ENCODE measurements at regions of chr6 and their contacts with region 1.

Region 1: GRCh38 chr6:149028767-149029405 is 282.1 kb downstream of the UST start:
- DNase-seq: peak in 8 of 9 donors; percentile 45 to 83 (median 76)
- ATAC-seq: peak; percentile 85
- H3K4me3 ChIP-seq: no peak overlapping the region
- H3K4me3 Mint-ChIP-seq: peak overlapping the region in 1 of 10 donors; percentile 68
- H3K27ac ChIP-seq: no peak overlapping the region
- H3K27ac Mint-ChIP-seq: peak overlapping the region in 4 of 9 donors; percentile 2 to 81 (median 43)
- H3K4me1 ChIP-seq: peaks cover 8 to 15% of the 10 kb centered on the region in 2 donors
- H3K4me1 Mint-ChIP-seq: peaks cover 0 to 52% (median 12%) of the 10 kb centered on the region in 7 donors
- H3K27me3 ChIP-seq: no peaks in the 10 kb centered on the region
- H3K27me3 Mint-ChIP-seq: no peaks in the 10 kb centered on the region

Region 2: DNA sequence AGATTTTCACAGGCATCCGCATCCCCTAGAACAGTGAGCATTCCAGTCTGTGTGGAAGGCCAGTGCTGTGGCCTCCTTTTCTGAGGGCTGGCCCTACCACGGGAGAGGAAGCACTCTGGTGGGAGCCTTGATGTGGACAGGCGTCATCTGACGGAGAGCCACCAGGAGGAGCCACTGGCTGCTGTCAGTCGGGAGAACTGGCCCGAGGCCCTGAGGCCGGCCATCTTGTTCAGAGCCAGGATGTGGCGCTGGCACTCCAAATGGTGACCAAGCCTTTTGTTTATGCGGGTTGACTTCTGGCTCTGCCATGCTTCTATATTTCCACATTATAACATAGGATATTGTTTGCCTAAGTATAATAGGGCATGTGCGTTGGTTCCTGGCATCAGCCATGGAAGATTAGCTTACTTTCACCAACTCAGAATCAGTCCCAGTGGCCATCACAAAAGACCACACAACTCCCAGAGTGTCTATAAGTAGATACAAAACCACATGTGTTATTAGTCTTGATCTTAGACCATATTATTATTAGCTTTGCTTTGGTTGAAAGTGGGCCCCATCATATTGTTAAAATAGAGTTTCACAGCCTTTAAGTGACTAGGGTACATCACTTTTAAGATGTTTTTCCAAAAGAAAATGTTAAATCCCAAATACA is 14.7 kb after region 1 on chr6:
- CTCF ChIA-PET with region 1: interaction called, 4 read pairs
- POLR2A ChIA-PET with region 1: interaction called, 3 read pairs
- intact Hi-C with region 1: loop called in 1 of 2 experiments (anchors 1 kb)
- DNase-seq: no peak
- ATAC-seq: no peak
- H3K4me3 ChIP-seq: no peak overlapping the region
- H3K4me3 Mint-ChIP-seq: no peak overlapping the region
- H3K27ac ChIP-seq: no peak overlapping the region
- H3K27ac Mint-ChIP-seq: no peak overlapping the region
- H3K4me1 ChIP-seq: peaks cover 8 to 18% of the 10 kb centered on the region in 2 donors
- H3K4me1 Mint-ChIP-seq: peaks cover 13 to 81% (median 27%) of the 10 kb centered on the region in 7 donors
- H3K27me3 ChIP-seq: no peaks in the 10 kb centered on the region
- H3K27me3 Mint-ChIP-seq: no peaks in the 10 kb centered on the region

Region 3: DNA sequence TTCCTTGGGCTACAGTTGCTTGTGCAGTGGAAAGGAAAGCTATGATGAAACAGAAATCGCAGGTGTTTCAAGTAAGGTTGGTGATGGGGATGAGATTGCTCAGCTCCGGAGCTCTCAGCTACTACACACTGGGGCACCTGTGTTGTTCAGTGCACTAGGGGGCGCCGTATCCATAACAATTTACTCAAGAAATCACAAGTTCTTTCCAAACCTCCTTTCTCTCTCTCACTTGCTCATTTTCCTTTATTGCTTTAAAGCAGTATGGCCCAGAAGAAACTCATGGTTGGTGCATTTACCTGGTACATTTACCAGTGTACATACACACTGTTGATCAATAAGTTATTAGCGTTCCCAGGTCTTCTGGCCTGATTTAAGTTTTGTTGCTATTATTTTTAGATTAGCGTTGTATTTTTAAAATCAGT is 53.4 kb after region 1 on chr6:
- CTCF ChIA-PET with region 1: interaction called, 19 read pairs
- POLR2A ChIA-PET with region 1: interaction called, 5 read pairs
- intact Hi-C with region 1: loop called (anchors 1 kb)
- DNase-seq: peak; percentile 59 to 84 (median 76)
- ATAC-seq: peak; percentile 97
- H3K4me3 ChIP-seq: no peak overlapping the region
- H3K4me3 Mint-ChIP-seq: peak overlapping the region in 2 of 10 donors; percentile 18 to 72
- H3K27ac ChIP-seq: no peak overlapping the region
- H3K27ac Mint-ChIP-seq: peak overlapping the region in 5 of 9 donors; percentile 4 to 90 (median 52)
- H3K4me1 ChIP-seq: peaks cover 16 to 25% of the 10 kb centered on the region in 2 donors
- H3K4me1 Mint-ChIP-seq: peaks cover 10 to 88% (median 39%) of the 10 kb centered on the region in 7 donors
- H3K27me3 ChIP-seq: no peaks in the 10 kb centered on the region
- H3K27me3 Mint-ChIP-seq: no peaks in the 10 kb centered on the region

Region 4: DNA sequence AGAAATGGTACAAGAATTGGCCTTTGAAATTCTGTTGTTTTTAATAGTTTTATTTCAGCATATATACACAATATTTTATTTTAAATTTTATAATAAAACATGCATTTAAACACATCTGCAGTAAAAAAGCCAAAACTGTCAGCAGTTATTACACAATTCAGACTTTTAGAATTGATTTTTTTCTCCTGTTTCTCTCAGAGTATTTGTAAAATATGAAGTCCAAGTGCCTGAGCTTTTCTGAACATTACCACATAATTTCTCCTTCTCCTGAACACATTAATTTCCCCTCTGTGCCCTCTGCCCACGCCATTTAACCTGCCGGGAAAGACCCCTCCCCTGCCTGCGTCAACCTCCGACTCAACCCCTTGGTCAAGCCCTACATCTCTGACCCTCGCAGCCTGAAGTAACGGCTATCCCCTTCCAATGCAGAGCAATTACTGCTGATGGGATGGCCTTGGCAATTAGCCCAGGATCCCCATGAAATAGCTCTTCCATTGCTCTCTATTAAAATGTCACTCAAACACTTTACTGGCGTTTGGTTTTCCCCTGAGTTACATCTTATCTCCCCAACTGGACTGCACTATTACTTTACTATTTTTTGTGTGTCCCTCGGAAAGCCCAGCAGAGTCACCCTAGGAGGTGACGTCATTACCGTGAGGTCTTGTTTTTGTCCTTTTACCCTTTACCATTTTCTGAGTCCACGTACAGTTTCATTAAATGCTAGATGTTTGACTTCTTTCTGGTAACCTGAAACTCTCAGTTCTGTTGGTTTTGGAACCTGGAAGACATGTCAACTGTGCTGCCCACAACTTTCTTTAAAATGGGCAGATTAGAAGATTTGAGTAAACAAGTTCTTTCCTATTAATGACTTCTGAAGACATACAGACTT is 141.9 kb after region 1 on chr6:
- CTCF ChIA-PET with region 1: no interaction called
- POLR2A ChIA-PET with region 1: no interaction called
- intact Hi-C with region 1: no loop called
- DNase-seq: no peak
- ATAC-seq: no peak
- H3K4me3 ChIP-seq: no peak overlapping the region
- H3K4me3 Mint-ChIP-seq: no peak overlapping the region
- H3K27ac ChIP-seq: no peak overlapping the region
- H3K27ac Mint-ChIP-seq: peak overlapping the region in 3 of 9 donors; percentile 41 to 80 (median 51)
- H3K4me1 ChIP-seq: peaks cover 12 to 26% of the 10 kb centered on the region in 2 donors
- H3K4me1 Mint-ChIP-seq: peaks cover 18 to 69% (median 39%) of the 10 kb centered on the region in 7 donors
- H3K27me3 ChIP-seq: no peaks in the 10 kb centered on the region
- H3K27me3 Mint-ChIP-seq: no peaks in the 10 kb centered on the region

Region 5: DNA sequence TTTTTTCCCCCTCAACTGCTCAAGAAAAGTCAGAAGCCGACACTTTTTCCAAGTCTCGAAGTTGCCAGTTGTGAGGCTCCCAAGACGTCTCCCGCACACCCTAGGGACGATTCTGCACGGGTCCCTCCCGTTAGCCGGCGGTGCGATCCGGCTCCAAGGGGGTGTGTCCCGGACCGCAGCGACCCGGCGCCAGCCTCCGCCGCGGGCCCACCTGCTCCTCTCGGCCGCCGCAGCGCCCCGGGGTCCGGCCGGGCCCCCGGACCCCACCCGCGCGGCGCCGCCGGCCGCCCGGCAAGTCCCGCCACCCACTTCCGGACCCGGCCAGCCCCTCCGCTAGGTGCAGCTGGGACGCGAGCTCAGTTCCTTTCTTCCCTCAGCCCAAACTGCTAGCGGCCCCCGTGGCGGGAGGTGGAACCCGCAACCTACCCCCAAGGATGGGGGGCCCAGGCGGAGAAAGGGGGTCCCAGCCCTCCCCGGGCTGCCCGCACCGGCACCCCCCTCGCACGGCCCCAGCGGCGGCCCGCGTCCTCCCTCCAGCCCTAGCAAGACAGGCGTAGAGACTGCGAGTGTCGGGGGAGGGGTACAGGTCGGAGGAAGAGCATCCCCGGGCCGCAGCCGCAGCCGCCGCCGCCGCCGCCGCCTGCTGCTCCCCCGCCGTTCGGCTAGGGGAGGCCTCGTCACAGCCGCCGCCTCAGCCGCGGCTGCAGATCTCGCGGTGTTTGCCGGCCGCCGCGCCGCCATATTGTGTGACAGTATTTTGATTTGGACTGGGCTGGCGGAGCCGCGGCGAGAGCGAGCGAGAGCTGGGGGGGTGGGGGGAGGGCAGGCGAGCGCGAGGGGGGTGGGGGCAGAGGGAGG is 288.1 kb after region 1 on chr6:
- CTCF ChIA-PET with region 1: no interaction called
- POLR2A ChIA-PET with region 1: no interaction called
- intact Hi-C with region 1: loop called (anchors 1 to 2 kb)
- DNase-seq: peak; percentile 83 to 91 (median 88)
- ATAC-seq: peak; percentile 86
- H3K4me3 ChIP-seq: peak overlapping the region; percentile 73
- H3K4me3 Mint-ChIP-seq: peak overlapping the region; percentile 74 to 99 (median 86)
- H3K27ac ChIP-seq: peak overlapping the region; percentile 95
- H3K27ac Mint-ChIP-seq: peak overlapping the region; percentile 81 to 92 (median 86)
- H3K4me1 ChIP-seq: peaks cover 13 to 26% of the 10 kb centered on the region in 2 donors
- H3K4me1 Mint-ChIP-seq: peaks cover 23 to 56% (median 42%) of the 10 kb centered on the region in 7 donors
- H3K27me3 ChIP-seq: no peaks in the 10 kb centered on the region
- H3K27me3 Mint-ChIP-seq: no peaks in the 10 kb centered on the region

Region 6: GRCh38 chr6:149513915-149514314 is 485.0 kb after region 1 on chr6:
- CTCF ChIA-PET with region 1: interaction called, 20 read pairs
- POLR2A ChIA-PET with region 1: no interaction called
- intact Hi-C with region 1: loop called (anchors 1 kb)
- DNase-seq: no peak
- ATAC-seq: peak; percentile 31
- H3K4me3 ChIP-seq: no peak overlapping the region
- H3K4me3 Mint-ChIP-seq: no peak overlapping the region
- H3K27ac ChIP-seq: no peak overlapping the region
- H3K27ac Mint-ChIP-seq: peak overlapping the region in 7 of 9 donors; percentile 42 to 72 (median 56)
- H3K4me1 ChIP-seq: peaks cover 13 to 16% of the 10 kb centered on the region in 2 donors
- H3K4me1 Mint-ChIP-seq: peaks cover 8 to 44% (median 43%) of the 10 kb centered on the region in 7 donors
- H3K27me3 ChIP-seq: no peaks in the 10 kb centered on the region
- H3K27me3 Mint-ChIP-seq: no peaks in the 10 kb centered on the region

Region 7: DNA sequence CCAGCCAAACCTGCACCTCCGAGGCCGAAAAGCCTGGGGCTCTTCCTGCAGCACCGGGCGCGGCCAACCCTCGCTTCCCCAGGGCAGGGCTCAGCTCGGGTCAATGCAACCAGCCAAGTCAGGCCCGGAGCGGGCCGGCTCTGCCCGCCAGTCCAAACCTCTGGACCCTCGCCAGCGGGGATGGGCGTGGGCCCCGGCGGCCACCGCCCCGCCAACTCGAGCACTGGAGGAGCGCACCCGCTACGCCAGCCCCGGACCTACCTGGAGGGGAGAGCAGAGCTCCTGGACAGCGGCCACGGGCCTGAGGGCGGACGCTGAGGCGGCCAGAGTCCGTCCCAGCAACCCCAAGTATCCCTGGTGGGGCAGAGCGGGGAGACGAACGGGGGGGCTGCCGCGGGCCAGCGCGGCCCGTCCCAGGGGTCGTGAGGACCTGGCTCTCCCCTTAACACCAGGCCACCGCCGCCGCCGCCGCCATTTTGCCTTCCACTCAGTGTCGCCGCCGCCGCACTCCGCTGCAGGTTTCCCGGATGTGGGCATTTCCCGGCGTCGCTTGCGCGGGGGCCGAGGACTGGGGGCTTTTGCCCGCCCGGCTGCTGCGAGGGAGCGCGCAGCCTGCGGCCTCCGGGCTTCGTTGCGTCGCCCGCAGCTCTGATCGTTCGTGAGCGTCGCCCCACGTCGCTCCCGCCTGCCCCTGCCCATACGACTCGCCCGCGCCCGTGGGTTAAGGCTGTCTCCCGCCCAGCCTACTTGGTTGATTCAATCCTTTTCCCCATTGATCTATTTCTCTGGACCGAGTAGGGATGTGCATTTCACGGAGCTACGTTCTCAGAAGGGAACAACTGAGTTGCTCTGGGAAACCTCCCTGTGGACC is 688.9 kb after region 1 on chr6 and contains the start of gene LATS1:
- CTCF ChIA-PET with region 1: no interaction called
- POLR2A ChIA-PET with region 1: no interaction called
- intact Hi-C with region 1: loop called in 1 of 2 experiments (anchors 10 kb)
- DNase-seq: peak; percentile 76 to 96 (median 91)
- ATAC-seq: peak; percentile 96
- H3K4me3 ChIP-seq: peak within 1 kb of the TSS; percentile 72
- H3K4me3 Mint-ChIP-seq: peak within 1 kb of the TSS; percentile 89 to 99 (median 94)
- H3K27ac ChIP-seq: peak within 1 kb of the TSS; percentile 97
- H3K27ac Mint-ChIP-seq: peak within 1 kb of the TSS; percentile 95 to 99 (median 97)
- H3K4me1 ChIP-seq: peaks cover 11 to 19% of the 10 kb centered on the region in 2 donors
- H3K4me1 Mint-ChIP-seq: peaks cover 18 to 51% (median 44%) of the 10 kb centered on the region in 7 donors
- H3K27me3 ChIP-seq: no peaks in the 10 kb centered on the region
- H3K27me3 Mint-ChIP-seq: no peaks in the 10 kb centered on the region
- total RNA-seq, gene LATS1: 33.3 to 49.5 (median 44.6) TPM